CD4-positive, alpha-beta memory T cell (primary cell): ENCODE measurements at regions of chr14 and their contacts with region 1.

Region 1: GRCh38 chr14:94161981-94162380 is 12.1 kb upstream of the PPP4R4 start:
- DNase-seq: no peak
- H3K4me3 ChIP-seq: no peak overlapping the region
- H3K4me3 Mint-ChIP-seq: peak overlapping the region in 6 of 8 donors; percentile 9 to 57 (median 20)
- H3K27ac ChIP-seq: no peak overlapping the region
- H3K27ac Mint-ChIP-seq: peak overlapping the region; percentile 9 to 89 (median 81)
- H3K4me1 ChIP-seq: peaks cover 74% of the 10 kb centered on the region
- H3K4me1 Mint-ChIP-seq: peaks cover 40 to 90% (median 68%) of the 10 kb centered on the region in 4 donors
- H3K27me3 ChIP-seq: no peaks in the 10 kb centered on the region
- H3K27me3 Mint-ChIP-seq: no peaks in the 10 kb centered on the region

Region 2: DNA sequence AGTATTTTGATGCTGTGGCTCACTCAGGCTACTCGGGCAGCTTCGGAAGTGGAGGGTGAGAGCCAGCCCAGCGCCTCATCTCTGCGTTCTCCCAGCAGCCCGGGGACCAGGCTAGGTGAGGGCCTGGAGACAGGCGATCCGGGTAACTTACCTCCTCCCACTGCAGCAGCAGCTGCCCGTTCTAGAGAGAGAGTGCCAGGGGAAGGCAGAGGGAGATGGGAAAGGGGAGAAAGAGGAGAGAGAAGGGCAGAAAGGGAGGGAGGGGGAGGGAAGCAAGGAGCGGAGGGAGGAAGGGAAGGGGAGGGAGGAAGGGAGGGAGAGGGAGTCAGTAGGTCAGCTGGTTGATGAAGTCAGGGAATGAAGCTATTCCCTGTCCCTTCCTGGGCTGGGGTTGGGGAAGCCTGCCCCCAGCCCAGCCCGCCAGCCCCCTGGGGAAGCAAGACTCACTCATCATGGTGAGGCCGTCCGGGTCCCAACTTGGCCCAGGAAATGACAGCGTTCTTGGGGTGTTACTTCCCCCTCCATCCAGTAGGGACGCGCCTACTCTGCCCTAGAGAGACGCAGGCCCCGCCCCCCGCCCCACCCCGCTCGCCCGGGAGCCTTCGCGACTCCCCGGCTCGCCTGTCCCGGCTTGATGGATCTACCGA is 32.7 kb before region 1 on chr14 and contains the start of gene IFI27L2:
- CTCF ChIA-PET with region 1: interaction called, 15 read pairs
- POLR2A ChIA-PET with region 1: interaction called, 4 read pairs
- intact Hi-C with region 1: no loop called
- DNase-seq: peak; percentile 34 to 80 (median 46)
- H3K4me3 ChIP-seq: peak within 1 kb of the TSS; percentile 50 to 82
- H3K4me3 Mint-ChIP-seq: peak within 1 kb of the TSS; percentile 86 to 93 (median 90)
- H3K27ac ChIP-seq: peak within 1 kb of the TSS; percentile 46
- H3K27ac Mint-ChIP-seq: peak within 1 kb of the TSS; percentile 77 to 88 (median 84)
- H3K4me1 ChIP-seq: peaks cover 18% of the 10 kb centered on the region
- H3K4me1 Mint-ChIP-seq: peaks cover 12 to 25% (median 20%) of the 10 kb centered on the region in 4 donors
- H3K27me3 ChIP-seq: no peaks in the 10 kb centered on the region
- H3K27me3 Mint-ChIP-seq: no peaks in the 10 kb centered on the region
- total RNA-seq, gene IFI27L2: 34.0 to 38.2 TPM

Region 3: GRCh38 chr14:94173885-94174603 is 12.1 kb after region 1 on chr14 and contains the start of gene PPP4R4:
- CTCF ChIA-PET with region 1: interaction called, 18 read pairs
- POLR2A ChIA-PET with region 1: interaction called, 35 read pairs
- intact Hi-C with region 1: loop called (anchors 1 kb)
- DNase-seq: peak; percentile 85 to 93 (median 87)
- H3K4me3 ChIP-seq: peak within 1 kb of the TSS in 1 of 2 donors; percentile 60
- H3K4me3 Mint-ChIP-seq: peak within 1 kb of the TSS; percentile 83 to 91 (median 88)
- H3K27ac ChIP-seq: peak within 1 kb of the TSS; percentile 37
- H3K27ac Mint-ChIP-seq: peak within 1 kb of the TSS; percentile 63 to 91 (median 86)
- H3K4me1 ChIP-seq: peaks cover 6% of the 10 kb centered on the region
- H3K4me1 Mint-ChIP-seq: peaks cover 16 to 28% (median 21%) of the 10 kb centered on the region in 4 donors
- H3K27me3 ChIP-seq: peaks cover 3% of the 10 kb centered on the region
- H3K27me3 Mint-ChIP-seq: peaks cover 0 to 7% of the 10 kb centered on the region in 2 donors
- total RNA-seq, gene PPP4R4: 6.3 to 7.3 TPM

Region 4: DNA sequence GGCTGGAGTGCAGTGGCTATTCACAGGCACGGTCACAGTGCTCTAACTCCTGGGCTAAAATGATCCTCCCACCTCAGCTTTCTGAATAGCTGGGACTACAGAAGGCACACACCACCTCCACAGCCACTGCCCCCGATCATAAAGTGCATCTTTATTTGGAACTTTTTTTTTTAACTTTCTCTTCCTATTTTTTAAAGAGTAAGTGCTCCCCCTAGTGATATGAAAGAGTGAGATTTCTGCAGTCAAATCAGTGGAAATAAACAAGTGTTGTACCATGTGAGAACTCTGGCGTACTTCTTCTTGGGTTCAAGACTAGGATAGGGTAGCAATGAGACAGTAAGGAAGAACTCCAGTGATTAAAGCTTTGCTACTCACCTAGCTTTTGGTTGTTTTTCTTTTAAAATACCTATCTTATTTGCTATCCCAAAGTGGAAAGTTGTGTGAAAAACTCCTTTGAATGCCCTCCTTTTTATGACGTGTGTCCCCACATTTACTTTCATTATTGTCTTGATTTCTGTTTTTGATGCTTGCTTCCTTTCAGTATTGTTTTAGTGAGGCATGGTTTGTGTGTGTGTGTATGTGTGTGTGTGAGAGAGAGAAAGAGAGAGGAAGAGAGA is 18.8 kb after region 1 on chr14:
- CTCF ChIA-PET with region 1: interaction called, 18 read pairs
- POLR2A ChIA-PET with region 1: interaction called, 35 read pairs
- intact Hi-C with region 1: no loop called
- DNase-seq: peak; percentile 68 to 81 (median 73)
- H3K4me3 ChIP-seq: peak overlapping the region in 1 of 2 donors; percentile 46
- H3K4me3 Mint-ChIP-seq: peak overlapping the region; percentile 2 to 79 (median 58)
- H3K27ac ChIP-seq: peak overlapping the region; percentile 29
- H3K27ac Mint-ChIP-seq: peak overlapping the region; percentile 18 to 91 (median 66)
- H3K4me1 ChIP-seq: peaks cover 10% of the 10 kb centered on the region
- H3K4me1 Mint-ChIP-seq: peaks cover 10 to 23% (median 16%) of the 10 kb centered on the region in 4 donors
- H3K27me3 ChIP-seq: peaks cover 2% of the 10 kb centered on the region
- H3K27me3 Mint-ChIP-seq: peaks cover 2 to 6% of the 10 kb centered on the region in 2 donors

Region 5: GRCh38 chr14:94412671-94413638 is 251.0 kb after region 1 on chr14:
- CTCF ChIA-PET with region 1: no interaction called
- POLR2A ChIA-PET with region 1: no interaction called
- intact Hi-C with region 1: no loop called
- DNase-seq: no peak
- H3K4me3 ChIP-seq: no peak overlapping the region
- H3K4me3 Mint-ChIP-seq: no peak overlapping the region
- H3K27ac ChIP-seq: no peak overlapping the region
- H3K27ac Mint-ChIP-seq: no peak overlapping the region
- H3K4me1 ChIP-seq: no peaks in the 10 kb centered on the region
- H3K4me1 Mint-ChIP-seq: no peaks in the 10 kb centered on the region
- H3K27me3 ChIP-seq: no peaks in the 10 kb centered on the region
- H3K27me3 Mint-ChIP-seq: peaks cover 13 to 22% of the 10 kb centered on the region in 2 donors

Region 6: GRCh38 chr14:94448071-94448808 is 286.3 kb after region 1 on chr14:
- CTCF ChIA-PET with region 1: no interaction called
- POLR2A ChIA-PET with region 1: no interaction called
- intact Hi-C with region 1: no loop called
- DNase-seq: no peak
- H3K4me3 ChIP-seq: no peak overlapping the region
- H3K4me3 Mint-ChIP-seq: no peak overlapping the region
- H3K27ac ChIP-seq: no peak overlapping the region
- H3K27ac Mint-ChIP-seq: no peak overlapping the region
- H3K4me1 ChIP-seq: no peaks in the 10 kb centered on the region
- H3K4me1 Mint-ChIP-seq: peaks cover 0 to 1% (median under 1%) of the 10 kb centered on the region in 4 donors
- H3K27me3 ChIP-seq: no peaks in the 10 kb centered on the region
- H3K27me3 Mint-ChIP-seq: peaks cover 9 to 14% of the 10 kb centered on the region in 2 donors

Region 7: DNA sequence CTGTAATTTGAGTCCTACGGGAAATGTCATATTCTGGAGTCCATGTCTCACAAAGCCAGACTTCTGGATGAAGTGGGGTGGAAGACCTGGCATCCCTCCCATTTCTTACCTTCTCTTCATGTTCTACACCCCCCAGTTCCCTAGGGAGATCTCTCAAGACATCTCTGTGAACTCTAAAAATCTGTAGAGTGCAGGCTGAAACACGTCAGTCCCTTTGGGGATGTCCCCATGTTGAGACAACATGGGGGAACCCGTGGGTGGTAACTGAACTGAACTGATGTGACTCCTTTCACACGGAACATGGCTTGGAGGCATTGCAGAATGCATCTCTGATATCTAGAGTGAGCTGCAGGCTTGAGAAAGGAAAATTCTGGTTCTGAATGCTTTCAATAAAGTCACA is 332.1 kb after region 1 on chr14:
- CTCF ChIA-PET with region 1: no interaction called
- POLR2A ChIA-PET with region 1: no interaction called
- intact Hi-C with region 1: no loop called
- DNase-seq: no peak
- H3K4me3 ChIP-seq: no peak overlapping the region
- H3K4me3 Mint-ChIP-seq: no peak overlapping the region
- H3K27ac ChIP-seq: no peak overlapping the region
- H3K27ac Mint-ChIP-seq: no peak overlapping the region
- H3K4me1 ChIP-seq: no peaks in the 10 kb centered on the region
- H3K4me1 Mint-ChIP-seq: no peaks in the 10 kb centered on the region
- H3K27me3 ChIP-seq: no peaks in the 10 kb centered on the region
- H3K27me3 Mint-ChIP-seq: peaks cover 5 to 7% of the 10 kb centered on the region in 2 donors